IMR-90 (cell line): ENCODE measurements at regions of chr13 and their contacts with region 1.

Region 1: GRCh38 chr13:46126552-46127357 is 21.9 kb upstream of the CPB2 start:
- DNase-seq: peak; percentile 68
- ATAC-seq: peak; percentile 100
- H3K4me3 ChIP-seq: no peak overlapping the region
- H3K27ac ChIP-seq: no peak overlapping the region
- H3K4me1 ChIP-seq: no peaks in the 10 kb centered on the region
- H3K27me3 ChIP-seq: peaks cover 14% of the 10 kb centered on the region
- CTCF ChIP-seq: peak; percentile 93
- POLR2A ChIP-seq: no peak
- RAD21 ChIP-seq: peak; percentile 81

Region 2: DNA sequence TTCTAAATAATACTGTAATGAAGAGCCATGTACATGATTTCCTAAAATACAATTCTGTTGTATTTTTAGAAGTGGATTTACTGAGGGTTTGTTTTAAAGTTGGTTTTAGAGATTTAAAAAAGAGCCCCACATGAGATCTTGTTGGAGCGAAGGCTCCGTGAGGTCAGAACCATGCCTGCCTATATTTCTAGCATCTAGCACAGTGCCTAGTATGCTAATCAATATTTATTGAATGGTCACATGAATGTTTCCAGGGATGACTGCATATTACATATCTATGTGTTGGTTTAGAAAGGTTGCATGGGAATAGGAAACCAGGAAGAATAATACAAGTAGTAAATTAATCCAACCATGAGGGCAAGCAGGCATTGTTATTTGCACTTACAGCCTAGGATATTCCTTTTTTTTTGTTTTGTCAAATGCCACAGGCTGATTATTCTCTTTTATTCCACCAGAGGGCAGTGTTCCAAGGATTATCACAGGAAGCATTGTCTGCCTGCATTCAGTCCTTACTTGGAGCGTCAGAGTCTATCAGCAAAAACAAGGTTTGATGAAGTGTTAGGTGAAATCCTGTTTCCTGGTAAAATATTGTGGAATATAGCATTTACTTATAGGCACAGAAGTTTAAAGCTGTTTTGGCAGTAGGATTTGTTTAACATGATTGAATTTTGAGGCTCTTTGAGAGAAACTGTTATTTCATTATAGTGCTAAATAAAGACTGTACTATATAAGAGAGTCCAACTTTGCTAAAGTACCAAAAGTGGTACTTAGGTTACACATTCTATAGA is 615.3 kb before region 1 on chr13:
- CTCF ChIA-PET with region 1: no interaction called
- POLR2A ChIA-PET with region 1: no interaction called
- dilution Hi-C with region 1: no loop called
- in situ Hi-C with region 1: no loop called
- intact Hi-C with region 1: loop called (anchors 1 kb)
- DNase-seq: peak; percentile 83
- ATAC-seq: peak; percentile 91
- H3K4me3 ChIP-seq: no peak overlapping the region
- H3K27ac ChIP-seq: no peak overlapping the region
- H3K4me1 ChIP-seq: peaks cover 3% of the 10 kb centered on the region; the same call in 1 of the 2 replicates
- H3K27me3 ChIP-seq: no peaks in the 10 kb centered on the region
- CTCF ChIP-seq: peak; percentile 80
- POLR2A ChIP-seq: no peak
- RAD21 ChIP-seq: peak; percentile 64

Region 3: DNA sequence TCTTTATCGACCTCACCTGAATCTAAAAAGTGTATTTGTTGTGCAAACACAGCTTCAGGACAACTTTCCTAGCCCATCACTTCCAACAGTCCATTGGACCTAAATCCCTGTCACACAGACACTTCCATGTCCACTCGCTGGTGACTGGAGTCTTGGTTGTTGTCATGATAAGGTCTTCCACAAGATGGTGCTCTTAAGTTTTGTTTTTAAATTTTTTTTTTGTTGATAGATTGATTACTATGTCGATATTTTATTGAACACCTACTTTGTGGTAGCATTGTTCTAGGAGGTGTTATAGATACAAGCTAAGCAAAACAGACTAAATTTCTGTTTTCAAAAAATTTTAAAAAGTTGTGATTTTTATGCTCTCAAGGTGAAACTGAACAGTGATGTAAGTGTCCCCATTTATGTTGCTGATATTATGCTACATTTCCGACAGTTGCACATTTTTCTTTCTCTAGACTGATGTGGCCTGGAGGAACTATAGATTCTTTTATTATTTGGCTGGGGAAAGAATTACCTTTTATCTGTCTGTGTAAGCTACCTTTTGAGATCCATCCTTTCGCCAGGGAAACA is 503.2 kb before region 1 on chr13:
- CTCF ChIA-PET with region 1: interaction called, 5 read pairs
- POLR2A ChIA-PET with region 1: no interaction called
- dilution Hi-C with region 1: no loop called
- in situ Hi-C with region 1: loop called (anchors 10 kb)
- intact Hi-C with region 1: loop called (anchors 1 kb)
- DNase-seq: peak; percentile 16
- ATAC-seq: peak; percentile 51
- H3K4me3 ChIP-seq: no peak overlapping the region
- H3K27ac ChIP-seq: no peak overlapping the region
- H3K4me1 ChIP-seq: no peaks in the 10 kb centered on the region
- H3K27me3 ChIP-seq: peaks cover 29% of the 10 kb centered on the region
- CTCF ChIP-seq: peak; percentile 50
- POLR2A ChIP-seq: no peak
- RAD21 ChIP-seq: peak; percentile 40

Region 4: DNA sequence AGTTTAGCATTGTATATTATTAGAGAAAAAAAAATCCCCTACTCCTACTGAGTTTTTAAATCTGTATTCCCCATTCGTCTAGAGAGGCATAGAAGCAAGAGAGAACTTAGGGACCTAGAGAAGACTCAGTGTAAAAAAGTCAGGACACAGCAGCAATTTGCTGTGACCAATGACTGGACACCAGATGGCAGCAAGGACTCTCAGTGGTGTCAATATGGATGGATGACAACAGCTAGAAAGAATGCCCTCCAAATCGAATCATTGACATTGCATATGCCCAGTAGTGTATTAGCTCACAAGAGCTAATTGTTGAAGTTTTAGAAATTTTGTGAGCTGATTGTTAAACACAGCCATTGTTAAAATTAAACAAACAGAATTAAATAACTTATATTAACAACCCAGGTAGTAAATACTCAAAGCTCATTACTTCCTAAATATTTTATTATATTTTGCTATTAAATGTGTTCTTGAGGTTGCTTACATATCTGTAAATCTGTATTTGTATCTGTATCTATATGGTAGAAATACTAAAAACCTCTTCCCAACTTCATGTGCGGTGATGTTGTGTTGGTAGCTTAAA is 319.1 kb before region 1 on chr13:
- CTCF ChIA-PET with region 1: interaction called, 3 read pairs
- POLR2A ChIA-PET with region 1: no interaction called
- dilution Hi-C with region 1: no loop called
- in situ Hi-C with region 1: no loop called
- intact Hi-C with region 1: loop called (anchors 2 kb)
- DNase-seq: peak; percentile 17
- ATAC-seq: peak; percentile 48
- H3K4me3 ChIP-seq: no peak overlapping the region
- H3K27ac ChIP-seq: no peak overlapping the region
- H3K4me1 ChIP-seq: no peaks in the 10 kb centered on the region
- H3K27me3 ChIP-seq: peaks cover 8% of the 10 kb centered on the region
- CTCF ChIP-seq: peak; percentile 33
- POLR2A ChIP-seq: no peak
- RAD21 ChIP-seq: peak; percentile 46

Region 5: GRCh38 chr13:45925151-45925550 is 201.6 kb before region 1 on chr13:
- CTCF ChIA-PET with region 1: no interaction called
- POLR2A ChIA-PET with region 1: no interaction called
- dilution Hi-C with region 1: no loop called
- in situ Hi-C with region 1: no loop called
- intact Hi-C with region 1: loop called (anchors 1 kb)
- DNase-seq: no peak
- ATAC-seq: no peak
- H3K4me3 ChIP-seq: no peak overlapping the region
- H3K27ac ChIP-seq: no peak overlapping the region
- H3K4me1 ChIP-seq: no peaks in the 10 kb centered on the region
- H3K27me3 ChIP-seq: peaks cover 12% of the 10 kb centered on the region
- CTCF ChIP-seq: peak; percentile 21; the same call in 1 of the 2 replicates
- POLR2A ChIP-seq: no peak
- RAD21 ChIP-seq: 0 out of 2 replicates have a peak, but pooled peaks have one; percentile 13

Region 6: DNA sequence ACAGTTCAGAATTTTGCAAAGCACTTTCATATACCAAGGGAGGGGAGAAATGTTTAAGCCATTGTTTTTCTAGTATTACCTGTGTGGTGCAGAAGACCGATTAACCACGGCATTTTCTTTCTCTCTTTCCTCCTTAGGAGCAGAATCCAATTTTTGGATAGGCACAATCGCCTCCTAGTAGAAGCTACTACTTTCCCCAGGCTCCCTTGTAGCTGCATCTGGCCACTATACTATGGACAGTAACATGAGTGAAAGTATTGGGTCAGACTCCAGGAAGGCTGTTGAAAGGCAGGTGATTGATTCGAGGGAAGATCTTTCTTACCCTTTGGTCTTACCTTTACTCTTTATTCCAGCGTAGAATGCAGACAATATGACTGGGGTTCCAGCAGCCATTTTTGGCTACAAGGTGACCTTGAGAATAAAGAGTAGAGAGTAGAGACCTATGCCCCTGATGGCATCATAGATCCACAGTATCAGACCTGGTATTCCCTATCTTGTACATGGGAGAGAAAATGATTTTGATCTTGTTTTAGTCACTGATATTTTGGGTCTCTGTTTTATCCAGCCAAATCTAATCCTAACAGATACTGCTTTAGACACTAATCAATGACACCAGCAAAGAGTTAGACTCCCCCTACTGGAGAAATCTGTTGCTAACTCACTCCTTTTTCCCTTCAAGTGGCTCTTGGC is 162.0 kb after region 1 on chr13:
- CTCF ChIA-PET with region 1: no interaction called
- POLR2A ChIA-PET with region 1: no interaction called
- dilution Hi-C with region 1: no loop called
- in situ Hi-C with region 1: no loop called
- intact Hi-C with region 1: no loop called
- DNase-seq: peak; percentile 22
- ATAC-seq: no peak
- H3K4me3 ChIP-seq: no peak overlapping the region
- H3K27ac ChIP-seq: no peak overlapping the region
- H3K4me1 ChIP-seq: no peaks in the 10 kb centered on the region
- H3K27me3 ChIP-seq: peaks cover 2% of the 10 kb centered on the region; the same call in 1 of the 2 replicates
- CTCF ChIP-seq: peak; percentile 50
- POLR2A ChIP-seq: no peak
- RAD21 ChIP-seq: peak; percentile 22; the same call in 1 of the 2 replicates